Gastrocnemius medialis (tissue), 4 donors: ENCODE measurements at regions of chr16 and their contacts with region 1.

Region 1: DNA sequence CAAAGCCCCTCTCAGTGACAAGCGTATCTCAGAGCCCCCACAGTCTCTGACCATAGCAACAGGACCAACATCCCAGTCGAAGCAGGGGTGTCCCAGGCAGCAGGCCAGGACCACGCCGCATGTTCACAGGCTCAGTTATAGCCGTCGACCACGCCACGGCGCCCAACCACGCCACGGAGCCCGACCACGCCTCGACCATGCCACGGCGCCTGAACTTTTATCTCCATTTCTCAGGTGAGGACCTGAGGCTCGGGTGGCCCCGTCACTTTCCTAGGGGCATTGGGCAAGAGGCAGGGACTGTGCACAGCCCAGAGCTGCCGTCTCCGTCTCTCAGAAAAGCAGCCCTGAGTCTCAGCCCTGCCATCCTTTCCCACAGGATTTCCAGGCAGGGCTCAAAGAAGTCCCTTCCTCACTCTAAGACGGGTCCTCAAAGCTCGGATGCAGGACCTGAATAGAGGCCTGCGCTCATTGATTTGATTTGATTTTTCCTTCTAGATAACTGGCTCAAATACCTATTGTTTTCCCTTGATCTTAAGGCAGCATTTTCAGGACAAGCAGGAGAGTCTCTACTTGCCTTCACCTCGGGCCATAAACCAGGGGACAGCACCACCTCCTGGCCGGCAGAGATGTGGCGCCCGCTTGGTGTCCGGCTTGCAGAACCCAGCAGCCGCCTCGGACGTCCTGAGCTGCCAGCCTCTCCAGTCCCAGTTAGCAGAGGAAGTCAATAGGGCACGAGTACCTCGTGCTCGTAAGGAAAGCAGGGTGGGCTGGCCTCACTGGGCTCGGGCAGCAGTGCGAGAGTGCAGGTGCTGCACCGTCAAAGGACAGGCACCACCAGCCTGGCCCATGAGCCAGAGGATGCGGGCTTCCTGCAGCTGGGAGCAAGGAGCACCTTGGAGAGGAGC is 38.7 kb downstream of the C16orf95 start:
- DNase-seq: peak; percentile 17 to 29
- ATAC-seq: peak; percentile 58 to 75
- H3K4me3 ChIP-seq: no peak overlapping the region
- H3K27ac ChIP-seq: no peak overlapping the region
- H3K4me1 ChIP-seq: no peaks in the 10 kb centered on the region
- H3K27me3 ChIP-seq: no peaks in the 10 kb centered on the region
- CTCF ChIP-seq: peak; percentile 50 to 75 (median 71)
- POLR2A ChIP-seq: no peak

Region 2: GRCh38 chr16:86554917-86555703 is 723.3 kb before region 1 on chr16 and contains the start of gene MTHFSD:
- in situ Hi-C with region 1: loop called (anchors 10 to 25 kb)
- intact Hi-C with region 1: no loop called
- DNase-seq: peak; percentile 85 to 90
- ATAC-seq: peak; percentile 50 to 70
- H3K4me3 ChIP-seq: peak within 1 kb of the TSS; percentile 78 to 95 (median 84)
- H3K27ac ChIP-seq: peak within 1 kb of the TSS; percentile 92 to 94 (median 93)
- H3K4me1 ChIP-seq: peaks cover 23 to 34% of the 10 kb centered on the region in 2 donors
- H3K27me3 ChIP-seq: no peaks in the 10 kb centered on the region
- CTCF ChIP-seq: no peak
- POLR2A ChIP-seq: peak; percentile 73 to 86
- total RNA-seq, gene MTHFSD: 10.9 to 31.2 (median 16.0) TPM

Region 3: GRCh38 chr16:87062569-87063442 is 215.6 kb before region 1 on chr16:
- in situ Hi-C with region 1: loop called in 1 of 4 experiments (anchors 25 kb)
- intact Hi-C with region 1: no loop called
- DNase-seq: peak in 1 of 2 donors; percentile 45
- ATAC-seq: peak; percentile 92
- H3K4me3 ChIP-seq: peak overlapping the region in 1 of 4 donors; percentile 33
- H3K27ac ChIP-seq: no peak overlapping the region
- H3K4me1 ChIP-seq: no peaks in the 10 kb centered on the region
- H3K27me3 ChIP-seq: peaks cover 0 to 24% (median 4%) of the 10 kb centered on the region in 3 donors
- CTCF ChIP-seq: peak; percentile 58 to 84 (median 79)
- POLR2A ChIP-seq: no peak

Region 4: GRCh38 chr16:87132491-87132961 is 145.9 kb before region 1 on chr16:
- in situ Hi-C with region 1: no loop called
- intact Hi-C with region 1: no loop called
- DNase-seq: no peak
- ATAC-seq: no peak
- H3K4me3 ChIP-seq: no peak overlapping the region
- H3K27ac ChIP-seq: no peak overlapping the region
- H3K4me1 ChIP-seq: no peaks in the 10 kb centered on the region
- H3K27me3 ChIP-seq: peaks cover 0 to 18% (median 8%) of the 10 kb centered on the region in 3 donors
- CTCF ChIP-seq: no peak
- POLR2A ChIP-seq: no peak

Region 5: DNA sequence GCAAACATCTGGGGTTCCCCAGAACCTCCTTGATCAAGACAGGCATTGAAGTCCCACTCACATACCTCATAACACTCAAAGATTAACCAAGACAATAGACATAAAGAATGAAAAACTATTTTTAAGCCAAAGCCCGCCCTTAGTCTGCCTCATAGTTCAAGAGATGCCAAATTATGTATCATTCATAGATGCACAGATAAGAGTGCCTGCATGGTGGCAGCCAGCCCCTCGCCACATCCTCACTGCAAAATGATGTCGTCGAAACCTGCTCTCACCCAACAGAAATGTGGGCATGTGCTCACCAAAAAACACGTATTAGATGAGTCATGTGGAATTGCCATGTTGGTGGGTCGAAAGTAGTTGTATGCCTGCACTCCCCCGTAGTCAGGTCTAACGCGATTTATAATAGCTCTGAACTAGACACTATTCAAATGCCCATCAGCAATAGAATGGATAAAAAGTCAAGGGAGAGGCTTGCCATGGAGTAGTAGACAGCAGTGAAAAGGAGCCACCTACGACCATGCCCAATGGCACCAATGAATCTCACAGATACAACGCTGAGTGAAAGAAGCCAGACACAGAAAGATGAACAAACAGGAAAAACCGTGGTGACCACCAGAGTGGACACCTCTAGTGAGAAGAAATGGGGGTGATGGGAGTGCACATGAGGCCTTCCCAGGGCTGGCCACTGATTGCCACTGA is 26.0 kb before region 1 on chr16:
- in situ Hi-C with region 1: no loop called
- intact Hi-C with region 1: no loop called
- DNase-seq: no peak
- ATAC-seq: no peak
- H3K4me3 ChIP-seq: no peak overlapping the region
- H3K27ac ChIP-seq: no peak overlapping the region
- H3K4me1 ChIP-seq: no peaks in the 10 kb centered on the region
- H3K27me3 ChIP-seq: no peaks in the 10 kb centered on the region
- CTCF ChIP-seq: no peak
- POLR2A ChIP-seq: no peak

Region 6: GRCh38 chr16:87387942-87388817 is 109.7 kb after region 1 on chr16:
- in situ Hi-C with region 1: no loop called
- intact Hi-C with region 1: no loop called
- DNase-seq: peak; percentile 98 to 99
- ATAC-seq: peak; percentile 74 to 78
- H3K4me3 ChIP-seq: peak overlapping the region; percentile 1 to 32 (median 18)
- H3K27ac ChIP-seq: peak overlapping the region; percentile 93 to 99 (median 98)
- H3K4me1 ChIP-seq: peaks cover 26 to 28% of the 10 kb centered on the region in 2 donors
- H3K27me3 ChIP-seq: no peaks in the 10 kb centered on the region
- CTCF ChIP-seq: no peak
- POLR2A ChIP-seq: peak; percentile 40 to 86